ENCODE measurements at regions of chr2 and their contacts with region 1.

Region 1: GRCh38 chr2:44087036-44087713 is 81.5 kb upstream of the PPM1B start:
- DNase-seq: peak; percentile 48 to 89 (median 76)
- ATAC-seq: peak; percentile 88 to 95 (median 90)
- H3K4me3 ChIP-seq: peak overlapping the region; percentile 38 to 54
- H3K4me3 Mint-ChIP-seq: peak overlapping the region; percentile 75 to 76 (median 75)
- H3K27ac ChIP-seq: peak overlapping the region; percentile 66
- H3K27ac Mint-ChIP-seq: peak overlapping the region; percentile 78 to 90
- H3K4me1 ChIP-seq: peaks cover 0 to 14% of the 10 kb centered on the region in 2 experiments
- H3K4me1 Mint-ChIP-seq: peaks cover 10 to 19% (median 11%) of the 10 kb centered on the region in 3 donors
- H3K27me3 ChIP-seq: peaks cover 0 to 7% of the 10 kb centered on the region in 2 experiments
- H3K27me3 Mint-ChIP-seq: no peaks in the 10 kb centered on the region

Region 2: GRCh38 chr2:44244129-44244871 is 157.1 kb after region 1 on chr2:
- CTCF ChIA-PET with region 1: interaction called, 3 to 14 read pairs
- POLR2A ChIA-PET with region 1: no interaction called
- DNase-seq: peak in 34 of 35 experiments; percentile 20 to 86 (median 43)
- ATAC-seq: peak; percentile 83 to 92 (median 86)
- H3K4me3 ChIP-seq: peak overlapping the region in 1 of 2 donors; percentile 33
- H3K4me3 Mint-ChIP-seq: peak overlapping the region; percentile 72 to 83 (median 73)
- H3K27ac ChIP-seq: no peak overlapping the region
- H3K27ac Mint-ChIP-seq: peak overlapping the region; percentile 31 to 70
- H3K4me1 ChIP-seq: peaks cover 4 to 5% of the 10 kb centered on the region in 2 experiments
- H3K4me1 Mint-ChIP-seq: peaks cover 30 to 34% (median 32%) of the 10 kb centered on the region in 3 donors
- H3K27me3 ChIP-seq: no peaks in the 10 kb centered on the region
- H3K27me3 Mint-ChIP-seq: no peaks in the 10 kb centered on the region

Region 3: DNA sequence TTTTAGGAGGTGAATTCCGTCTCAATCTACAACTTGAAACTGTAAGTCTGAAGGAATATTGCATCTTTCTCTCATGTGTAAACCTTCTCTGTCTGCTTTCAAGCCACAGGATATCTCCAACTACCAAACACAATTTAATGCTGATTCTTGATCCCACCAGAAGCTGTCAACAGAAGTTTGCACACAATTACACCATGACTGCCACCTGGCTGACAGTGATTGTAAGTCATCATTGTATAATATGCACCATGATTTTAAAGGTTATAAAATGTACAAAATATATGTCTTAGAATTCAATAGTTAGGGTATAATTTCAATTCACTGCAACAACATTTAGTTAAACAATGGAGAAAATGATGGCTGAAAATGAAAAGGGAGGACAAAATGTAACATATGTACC is 255.7 kb after region 1 on chr2:
- CTCF ChIA-PET with region 1: interaction called, 5 to 11 read pairs
- POLR2A ChIA-PET with region 1: no interaction called
- DNase-seq: peak in 28 of 35 experiments; percentile 5 to 59 (median 16)
- ATAC-seq: peak in 2 of 4 experiments; percentile 19 to 72
- H3K4me3 ChIP-seq: no peak overlapping the region
- H3K4me3 Mint-ChIP-seq: no peak overlapping the region
- H3K27ac ChIP-seq: no peak overlapping the region
- H3K27ac Mint-ChIP-seq: no peak overlapping the region
- H3K4me1 ChIP-seq: no peaks in the 10 kb centered on the region
- H3K4me1 Mint-ChIP-seq: peaks cover 3 to 9% (median 8%) of the 10 kb centered on the region in 3 donors
- H3K27me3 ChIP-seq: no peaks in the 10 kb centered on the region
- H3K27me3 Mint-ChIP-seq: no peaks in the 10 kb centered on the region

Region 4: GRCh38 chr2:44479122-44479887 is 392.1 kb after region 1 on chr2:
- CTCF ChIA-PET with region 1: interaction called in 1 of 2 experiments, 14 read pairs
- POLR2A ChIA-PET with region 1: no interaction called
- DNase-seq: peak in 31 of 35 experiments; percentile 0 to 81 (median 30)
- ATAC-seq: peak; percentile 99 to 100 (median 100)
- H3K4me3 ChIP-seq: no peak overlapping the region
- H3K4me3 Mint-ChIP-seq: no peak overlapping the region
- H3K27ac ChIP-seq: no peak overlapping the region
- H3K27ac Mint-ChIP-seq: no peak overlapping the region
- H3K4me1 ChIP-seq: no peaks in the 10 kb centered on the region
- H3K4me1 Mint-ChIP-seq: peaks cover 7 to 10% (median 8%) of the 10 kb centered on the region in 3 donors
- H3K27me3 ChIP-seq: no peaks in the 10 kb centered on the region
- H3K27me3 Mint-ChIP-seq: no peaks in the 10 kb centered on the region

Region 5: DNA sequence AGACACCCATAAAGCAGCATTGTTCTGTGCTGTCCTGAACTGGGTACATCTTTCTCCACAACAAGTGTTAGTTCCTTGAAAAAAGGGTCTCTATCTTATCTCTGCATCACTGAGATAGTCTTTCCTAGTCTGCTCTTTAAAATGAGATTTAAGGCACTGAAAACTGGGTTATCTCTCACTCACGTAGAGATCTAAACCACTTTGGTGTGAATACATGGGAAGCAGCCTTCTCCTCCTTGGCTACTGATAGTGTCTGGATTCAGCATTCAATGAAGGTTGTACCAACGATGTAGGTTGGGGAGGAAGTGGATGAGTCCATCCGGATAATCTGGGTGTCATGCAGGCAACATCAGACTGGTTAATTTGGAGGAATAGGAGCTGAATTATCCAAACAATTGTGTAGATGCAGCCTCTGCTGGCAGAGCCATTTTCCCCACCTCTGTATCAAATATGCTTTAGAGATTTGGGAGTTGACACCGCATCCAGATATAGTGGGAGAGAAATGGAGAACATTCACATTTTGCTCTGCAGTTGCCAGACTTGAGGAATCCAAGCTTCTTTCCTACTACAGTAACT is 838.5 kb after region 1 on chr2:
- CTCF ChIA-PET with region 1: no interaction called
- POLR2A ChIA-PET with region 1: interaction called in 1 of 2 experiments, 12 read pairs
- DNase-seq: no peak
- ATAC-seq: no peak
- H3K4me3 ChIP-seq: no peak overlapping the region
- H3K4me3 Mint-ChIP-seq: no peak overlapping the region
- H3K27ac ChIP-seq: no peak overlapping the region
- H3K27ac Mint-ChIP-seq: no peak overlapping the region
- H3K4me1 ChIP-seq: peaks cover 0 to 6% of the 10 kb centered on the region in 2 experiments
- H3K4me1 Mint-ChIP-seq: peaks cover 0 to 16% (median 11%) of the 10 kb centered on the region in 3 donors
- H3K27me3 ChIP-seq: peaks cover 26 to 37% of the 10 kb centered on the region in 2 experiments
- H3K27me3 Mint-ChIP-seq: peaks cover 66 to 71% of the 10 kb centered on the region in 2 donors

Measured in T-cell (primary cell).